ENCODE measurements at regions of chr19 and their contacts with region 1.

Region 1: GRCh38 chr19:47210689-47211316 is 20.2 kb downstream of the BBC3 start:
- DNase-seq: peak; percentile 60 to 88
- H3K4me3 ChIP-seq: no peak overlapping the region
- H3K27ac ChIP-seq: peak overlapping the region; percentile 51; the same call in 1 of the 2 replicates
- H3K4me1 ChIP-seq: peaks cover 0 to 14% (median 5%) of the 10 kb centered on the region in 4 experiments; a peak in 5 of 7 replicates
- H3K27me3 ChIP-seq: no peaks in the 10 kb centered on the region
- CTCF ChIP-seq: peak in 2 of 3 experiments; percentile 70 to 79; a peak in 3 of 4 replicates
- EP300 ChIP-seq: no peak
- POLR2A ChIP-seq: no peak; a peak in 1 of 3 replicates
- RAD21 ChIP-seq: peak; percentile 68 to 76

Region 2: DNA sequence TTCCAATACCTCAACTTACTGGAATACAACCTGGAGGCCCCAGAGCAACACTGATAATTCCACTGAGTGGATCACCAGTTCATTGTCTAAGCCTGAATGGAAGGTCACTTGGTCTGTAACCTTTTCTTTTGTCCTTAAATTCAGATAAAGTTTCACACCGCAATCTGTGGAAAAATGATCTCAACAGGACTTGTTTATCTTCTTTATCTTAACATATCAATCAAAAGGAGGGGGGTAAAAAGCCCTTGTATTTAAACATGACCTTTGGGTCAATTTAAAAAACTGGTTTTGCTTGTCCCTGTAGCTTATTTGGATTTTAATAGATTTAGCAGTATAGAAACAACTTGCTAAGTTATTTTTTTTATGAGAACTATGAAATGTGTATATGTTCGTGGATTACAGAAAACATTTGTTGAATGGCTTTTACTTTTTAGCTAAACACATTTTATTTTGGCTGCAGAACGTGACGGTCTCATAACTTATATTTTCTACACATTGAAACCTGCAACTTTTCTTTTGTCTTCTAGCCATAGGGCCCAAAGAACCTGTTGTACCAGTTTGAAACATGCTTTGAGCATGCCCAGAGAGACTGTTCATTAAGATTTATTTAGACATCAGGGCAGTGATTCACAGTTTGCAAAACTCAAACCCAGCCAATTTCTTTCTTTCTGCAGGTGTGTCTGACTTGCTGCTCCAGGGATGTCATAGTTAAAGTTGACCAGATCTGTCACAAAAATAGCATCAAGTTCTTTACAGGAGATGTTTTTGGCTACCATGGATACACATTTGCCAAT is 58.4 kb before region 1 on chr19:
- CTCF ChIA-PET with region 1: interaction called, 10 read pairs
- POLR2A ChIA-PET with region 1: interaction called, 8 read pairs
- DNase-seq: no peak
- H3K4me3 ChIP-seq: no peak overlapping the region
- H3K27ac ChIP-seq: no peak overlapping the region
- H3K4me1 ChIP-seq: peaks cover under 1 to 8% (median 5%) of the 10 kb centered on the region in 4 experiments; a peak in 5 of 7 replicates
- H3K27me3 ChIP-seq: no peaks in the 10 kb centered on the region
- CTCF ChIP-seq: no peak
- EP300 ChIP-seq: no peak
- POLR2A ChIP-seq: no peak
- RAD21 ChIP-seq: no peak

Region 3: GRCh38 chr19:47176627-47177090 is 34.1 kb before region 1 on chr19:
- CTCF ChIA-PET with region 1: interaction called, 19 read pairs
- POLR2A ChIA-PET with region 1: interaction called, 3 read pairs
- DNase-seq: no peak
- H3K4me3 ChIP-seq: no peak overlapping the region
- H3K27ac ChIP-seq: no peak overlapping the region
- H3K4me1 ChIP-seq: no peaks in the 10 kb centered on the region
- H3K27me3 ChIP-seq: no peaks in the 10 kb centered on the region
- CTCF ChIP-seq: no peak
- EP300 ChIP-seq: no peak
- POLR2A ChIP-seq: no peak
- RAD21 ChIP-seq: no peak

Region 4: DNA sequence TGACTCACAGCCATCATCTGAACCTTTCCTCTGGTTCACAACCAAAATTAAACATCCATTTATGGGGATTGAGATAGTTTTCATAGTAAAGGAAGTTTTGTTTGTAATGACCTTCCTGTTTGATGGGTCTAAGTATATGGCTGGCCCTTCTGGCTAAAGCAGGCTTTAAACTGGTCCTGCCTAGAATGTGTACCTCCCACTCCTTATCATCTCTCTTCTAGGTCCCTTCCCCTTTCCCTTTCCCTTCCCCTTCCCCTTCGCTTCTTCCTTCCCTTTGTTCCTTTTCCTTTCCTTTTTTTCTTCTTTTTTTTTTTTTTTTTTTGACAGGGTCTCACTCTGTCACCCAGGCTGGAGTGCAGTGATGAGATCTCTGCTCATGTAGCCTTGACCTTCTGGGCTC is 15.4 kb before region 1 on chr19:
- CTCF ChIA-PET with region 1: interaction called, 24 read pairs
- POLR2A ChIA-PET with region 1: interaction called, 12 read pairs
- DNase-seq: no peak
- H3K4me3 ChIP-seq: no peak overlapping the region
- H3K27ac ChIP-seq: no peak overlapping the region
- H3K4me1 ChIP-seq: no peaks in the 10 kb centered on the region
- H3K27me3 ChIP-seq: no peaks in the 10 kb centered on the region
- CTCF ChIP-seq: no peak
- EP300 ChIP-seq: no peak
- POLR2A ChIP-seq: no peak
- RAD21 ChIP-seq: no peak

Region 5: DNA sequence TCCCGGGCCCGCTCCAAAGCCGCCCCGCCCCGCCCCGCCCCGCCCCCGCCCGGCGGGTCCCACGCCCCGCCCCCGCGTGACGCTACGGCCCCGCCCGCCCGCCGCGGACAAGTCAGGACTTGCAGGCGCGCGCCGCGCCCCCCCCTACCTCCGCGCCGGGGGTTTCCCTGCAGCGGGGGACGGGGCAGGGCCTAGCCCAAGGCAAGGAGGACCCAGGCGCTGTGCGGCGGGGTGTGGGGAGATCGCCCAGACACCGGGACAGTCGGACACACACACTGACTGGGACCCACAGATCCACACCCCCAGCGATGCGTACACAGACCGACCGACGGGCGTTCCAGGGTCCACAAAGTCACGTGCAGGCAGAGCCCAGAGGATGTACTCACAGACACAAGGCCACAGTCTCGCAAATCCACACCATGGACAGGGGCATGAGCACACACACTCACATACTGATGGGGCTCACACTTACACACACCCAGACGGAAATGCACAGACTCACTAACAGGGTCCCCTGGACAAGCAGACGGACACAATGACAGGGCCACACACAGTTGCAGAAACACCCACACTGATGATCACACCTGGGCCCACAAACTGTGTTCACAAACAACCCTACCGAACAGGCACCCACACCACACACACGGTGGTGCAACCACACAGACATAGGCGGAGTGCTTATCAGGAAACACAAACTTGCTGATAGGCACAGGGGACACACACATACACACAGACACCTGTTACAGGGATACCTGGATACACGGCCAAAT is 20.6 kb after region 1 on chr19:
- CTCF ChIA-PET with region 1: interaction called, 152 read pairs
- POLR2A ChIA-PET with region 1: interaction called, 195 read pairs
- DNase-seq: peak in 1 of 2 experiments; percentile 86
- H3K4me3 ChIP-seq: peak overlapping the region; percentile 50 to 99 (median 70)
- H3K27ac ChIP-seq: peak overlapping the region; percentile 94
- H3K4me1 ChIP-seq: peaks cover 12 to 36% (median 24%) of the 10 kb centered on the region in 4 experiments
- H3K27me3 ChIP-seq: no peaks in the 10 kb centered on the region; a peak in 1 of 7 replicates
- CTCF ChIP-seq: no peak
- EP300 ChIP-seq: 0 out of 3 replicates have a peak, but pooled peaks of 1 of the 2 experiments have one; percentile 64
- POLR2A ChIP-seq: peak in 1 of 2 experiments; percentile 71; a peak in 2 of 3 replicates
- RAD21 ChIP-seq: no peak

Region 6: GRCh38 chr19:47267350-47267759 is 56.6 kb after region 1 on chr19:
- CTCF ChIA-PET with region 1: interaction called, 14 read pairs
- POLR2A ChIA-PET with region 1: interaction called, 3 read pairs
- DNase-seq: no peak
- H3K4me3 ChIP-seq: no peak overlapping the region
- H3K27ac ChIP-seq: no peak overlapping the region
- H3K4me1 ChIP-seq: peaks cover 0 to 5% (median 1%) of the 10 kb centered on the region in 4 experiments; a peak in 6 of 7 replicates
- H3K27me3 ChIP-seq: no peaks in the 10 kb centered on the region
- CTCF ChIP-seq: no peak
- EP300 ChIP-seq: no peak
- POLR2A ChIP-seq: no peak
- RAD21 ChIP-seq: no peak

Region 7: GRCh38 chr19:47324502-47324901 is 113.7 kb after region 1 on chr19:
- CTCF ChIA-PET with region 1: no interaction called
- POLR2A ChIA-PET with region 1: no interaction called
- DNase-seq: no peak
- H3K4me3 ChIP-seq: no peak overlapping the region
- H3K27ac ChIP-seq: no peak overlapping the region
- H3K4me1 ChIP-seq: peaks cover 0 to 3% (median 0%) of the 10 kb centered on the region in 4 experiments; a peak in 1 of 7 replicates
- H3K27me3 ChIP-seq: no peaks in the 10 kb centered on the region; a peak in 2 of 7 replicates
- CTCF ChIP-seq: no peak
- EP300 ChIP-seq: no peak
- POLR2A ChIP-seq: no peak
- RAD21 ChIP-seq: no peak

Region 8: DNA sequence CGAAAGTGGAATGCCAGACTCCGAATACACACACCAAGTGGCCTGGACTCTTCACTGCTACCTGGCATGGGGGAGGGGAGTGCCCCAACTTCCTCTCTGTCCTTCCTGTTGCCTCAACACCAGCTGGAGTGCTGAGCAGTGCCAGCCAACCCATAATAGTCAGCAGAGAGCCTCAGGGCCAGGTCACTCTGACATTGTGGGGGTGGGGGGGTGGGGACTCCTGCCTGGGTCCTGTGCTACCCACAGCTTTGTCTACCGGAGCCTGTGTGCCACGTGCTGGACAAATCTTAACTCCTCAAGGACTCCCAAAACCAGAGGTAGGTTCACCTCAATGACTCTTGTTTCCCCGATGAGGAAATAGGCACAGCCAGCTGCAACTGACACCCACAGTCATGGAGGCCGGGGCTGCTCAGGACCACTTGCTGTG is 126.1 kb after region 1 on chr19:
- CTCF ChIA-PET with region 1: no interaction called
- POLR2A ChIA-PET with region 1: no interaction called
- DNase-seq: no peak
- H3K4me3 ChIP-seq: no peak overlapping the region
- H3K27ac ChIP-seq: no peak overlapping the region
- H3K4me1 ChIP-seq: peaks cover 0 to 3% (median 0%) of the 10 kb centered on the region in 4 experiments; a peak in 1 of 7 replicates
- H3K27me3 ChIP-seq: no peaks in the 10 kb centered on the region
- CTCF ChIP-seq: no peak
- EP300 ChIP-seq: no peak
- POLR2A ChIP-seq: no peak
- RAD21 ChIP-seq: no peak

Region 9: GRCh38 chr19:47573071-47574026 is 362.5 kb after region 1 on chr19 and contains the start of gene ZNF541:
- CTCF ChIA-PET with region 1: no interaction called
- POLR2A ChIA-PET with region 1: no interaction called
- DNase-seq: no peak
- H3K4me3 ChIP-seq: no peak within 1 kb of the TSS
- H3K27ac ChIP-seq: no peak within 1 kb of the TSS
- H3K4me1 ChIP-seq: peaks cover 0 to 3% (median 1%) of the 10 kb centered on the region in 4 experiments; a peak in 2 of 7 replicates
- H3K27me3 ChIP-seq: no peaks in the 10 kb centered on the region
- CTCF ChIP-seq: no peak
- EP300 ChIP-seq: no peak
- POLR2A ChIP-seq: no peak
- RAD21 ChIP-seq: no peak
- total RNA-seq, gene ZNF541: 0.50 TPM in 1 of 2 replicates, not detected in the other